Heart left ventricle (tissue), 16 donors: ENCODE measurements at regions of chr12 and their contacts with region 1.

Region 1: GRCh38 chr12:121334513-121335343 is 17.5 kb downstream of the ANAPC5 start:
- DNase-seq: no peak
- ATAC-seq: peak in 3 of 4 donors; percentile 71 to 81 (median 79)
- H3K4me3 ChIP-seq: no peak overlapping the region
- H3K27ac ChIP-seq: no peak overlapping the region
- H3K4me1 ChIP-seq: peaks cover 0 to 4% (median 0%) of the 10 kb centered on the region in 12 donors
- H3K27me3 ChIP-seq: no peaks in the 10 kb centered on the region
- CTCF ChIP-seq: peak; percentile 76 to 93 (median 86)
- POLR2A ChIP-seq: no peak

Region 2: DNA sequence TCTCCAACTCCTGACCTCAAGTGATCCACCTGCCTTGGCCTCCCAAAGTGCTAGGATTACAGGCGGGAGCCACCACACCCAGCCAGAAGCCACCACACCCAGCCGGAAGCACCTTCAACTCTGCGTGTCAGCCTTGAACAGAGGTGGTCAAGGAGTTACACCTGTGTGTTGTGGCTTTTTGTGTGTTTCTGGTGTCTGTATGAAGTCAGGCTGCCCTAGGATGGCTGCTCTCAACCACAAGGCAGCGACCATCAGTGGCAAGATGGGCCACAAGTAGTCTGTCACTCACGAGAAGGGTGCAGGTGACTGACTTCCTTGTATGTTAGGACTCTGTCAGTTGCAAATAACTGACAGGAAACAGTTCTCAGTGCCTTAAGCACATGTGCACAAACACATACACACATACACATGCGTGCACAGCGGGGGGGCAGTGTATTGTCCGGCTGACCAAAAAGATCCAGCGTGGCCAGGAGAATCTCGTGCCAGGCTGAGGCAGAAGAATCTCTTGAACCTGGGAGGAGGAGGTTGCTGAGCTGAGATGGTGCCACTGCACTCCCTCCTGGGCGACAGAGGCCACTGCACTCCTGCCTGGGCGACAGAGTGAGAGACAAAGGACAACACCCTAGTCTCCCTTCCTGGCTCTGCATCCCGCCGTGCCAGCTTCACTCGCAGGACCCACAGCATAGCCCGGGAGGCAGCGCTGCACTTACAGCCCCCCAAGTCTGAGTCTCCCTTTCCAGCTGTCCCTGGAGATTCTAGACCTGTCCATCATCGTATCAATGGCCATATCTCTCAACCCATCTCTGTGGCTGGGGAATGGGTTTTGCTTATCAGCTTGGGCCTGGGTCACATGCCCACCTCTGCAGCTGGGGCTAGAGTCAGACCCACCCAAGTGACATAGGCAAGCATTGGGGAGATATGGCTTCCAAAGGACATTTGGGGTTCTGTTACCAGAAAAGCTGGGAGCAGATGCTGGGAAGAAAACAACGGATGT is 111.1 kb before region 1 on chr12:
- intact Hi-C with region 1: no loop called
- DNase-seq: no peak
- ATAC-seq: no peak
- H3K4me3 ChIP-seq: no peak overlapping the region
- H3K27ac ChIP-seq: no peak overlapping the region
- H3K4me1 ChIP-seq: peaks cover 0 to 3% (median 0%) of the 10 kb centered on the region in 12 donors
- H3K27me3 ChIP-seq: no peaks in the 10 kb centered on the region
- CTCF ChIP-seq: no peak
- POLR2A ChIP-seq: no peak

Region 3: GRCh38 chr12:121248622-121249021 is 86.1 kb before region 1 on chr12:
- intact Hi-C with region 1: no loop called
- DNase-seq: no peak
- ATAC-seq: no peak
- H3K4me3 ChIP-seq: no peak overlapping the region
- H3K27ac ChIP-seq: no peak overlapping the region
- H3K4me1 ChIP-seq: no peaks in the 10 kb centered on the region
- H3K27me3 ChIP-seq: no peaks in the 10 kb centered on the region
- CTCF ChIP-seq: no peak
- POLR2A ChIP-seq: no peak

Region 4: GRCh38 chr12:121443193-121443870 is 108.6 kb after region 1 on chr12:
- intact Hi-C with region 1: loop called (anchors 1 to 5 kb)
- DNase-seq: peak; percentile 76 to 92 (median 89)
- ATAC-seq: peak; percentile 89 to 94 (median 92)
- H3K4me3 ChIP-seq: no peak overlapping the region
- H3K27ac ChIP-seq: peak overlapping the region in 1 of 12 donors; percentile 30
- H3K4me1 ChIP-seq: peaks cover 0 to 9% (median 0%) of the 10 kb centered on the region in 12 donors
- H3K27me3 ChIP-seq: no peaks in the 10 kb centered on the region
- CTCF ChIP-seq: peak; percentile 73 to 92 (median 84)
- POLR2A ChIP-seq: no peak

Region 5: GRCh38 chr12:121688966-121689365 is 354.2 kb after region 1 on chr12:
- intact Hi-C with region 1: loop called in 1 of 10 experiments (anchors 10 kb)
- DNase-seq: no peak
- ATAC-seq: no peak
- H3K4me3 ChIP-seq: no peak overlapping the region
- H3K27ac ChIP-seq: no peak overlapping the region
- H3K4me1 ChIP-seq: peaks cover 0 to 14% (median 5%) of the 10 kb centered on the region in 12 donors
- H3K27me3 ChIP-seq: no peaks in the 10 kb centered on the region
- CTCF ChIP-seq: no peak
- POLR2A ChIP-seq: no peak